Activated CD4-positive, alpha-beta T cell treated with anti-CD3 and anti-CD28 coated beads, Interleukin-2, amount 10 ng/mL, durations not matched to agents 7 days and 5 days (primary cell): ENCODE measurements at regions of chr10 and their contacts with region 1.

Region 1: DNA sequence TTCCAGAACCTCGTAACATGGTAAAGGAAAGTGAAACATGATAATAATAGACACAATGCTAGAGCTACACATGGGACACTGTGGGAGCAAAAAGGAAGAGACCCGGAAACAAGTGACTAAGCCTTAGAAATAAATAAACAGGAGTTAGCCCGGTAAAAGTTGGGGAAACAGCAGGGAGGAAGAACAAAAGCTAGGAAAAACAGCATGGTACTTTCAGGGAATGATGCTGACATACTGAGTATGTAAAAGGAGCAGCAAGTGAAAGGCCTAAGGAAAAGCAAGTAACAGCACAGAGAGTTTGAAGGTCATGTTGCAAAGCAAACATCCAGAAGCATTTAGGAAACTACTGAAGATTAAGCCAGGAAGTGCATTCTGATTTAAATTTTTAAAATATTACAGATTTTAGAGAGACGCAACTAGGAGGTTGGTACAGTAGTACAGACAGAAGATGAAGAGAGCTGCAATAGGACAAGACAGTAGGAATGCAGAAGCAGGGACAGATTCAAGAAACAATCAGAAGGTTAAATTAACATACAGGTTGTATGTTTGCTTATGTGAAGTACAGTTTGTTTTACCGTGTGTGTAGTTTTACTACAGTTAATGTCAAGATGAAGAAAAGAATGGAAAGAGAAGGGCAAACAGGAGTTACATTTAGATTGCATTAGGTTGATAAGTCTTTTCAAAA is 63.7 kb downstream of the ARHGAP12 start:
- DNase-seq: no peak
- H3K4me3 Mint-ChIP-seq: no peak overlapping the region
- H3K27ac Mint-ChIP-seq: no peak overlapping the region
- H3K4me1 Mint-ChIP-seq: peaks cover 14% of the 10 kb centered on the region
- H3K27me3 Mint-ChIP-seq: no peaks in the 10 kb centered on the region

Region 2: GRCh38 chr10:31830887-31831286 is 34.1 kb before region 1 on chr10:
- CTCF ChIA-PET with region 1: no interaction called
- POLR2A ChIA-PET with region 1: no interaction called
- DNase-seq: no peak
- H3K4me3 Mint-ChIP-seq: no peak overlapping the region
- H3K27ac Mint-ChIP-seq: no peak overlapping the region
- H3K4me1 Mint-ChIP-seq: peaks cover 5% of the 10 kb centered on the region
- H3K27me3 Mint-ChIP-seq: no peaks in the 10 kb centered on the region

Region 3: GRCh38 chr10:31883397-31883796 is 18.4 kb after region 1 on chr10:
- CTCF ChIA-PET with region 1: no interaction called
- POLR2A ChIA-PET with region 1: no interaction called
- DNase-seq: no peak
- H3K4me3 Mint-ChIP-seq: no peak overlapping the region
- H3K27ac Mint-ChIP-seq: peak overlapping the region; percentile 1
- H3K4me1 Mint-ChIP-seq: no peaks in the 10 kb centered on the region
- H3K27me3 Mint-ChIP-seq: no peaks in the 10 kb centered on the region

Region 4: DNA sequence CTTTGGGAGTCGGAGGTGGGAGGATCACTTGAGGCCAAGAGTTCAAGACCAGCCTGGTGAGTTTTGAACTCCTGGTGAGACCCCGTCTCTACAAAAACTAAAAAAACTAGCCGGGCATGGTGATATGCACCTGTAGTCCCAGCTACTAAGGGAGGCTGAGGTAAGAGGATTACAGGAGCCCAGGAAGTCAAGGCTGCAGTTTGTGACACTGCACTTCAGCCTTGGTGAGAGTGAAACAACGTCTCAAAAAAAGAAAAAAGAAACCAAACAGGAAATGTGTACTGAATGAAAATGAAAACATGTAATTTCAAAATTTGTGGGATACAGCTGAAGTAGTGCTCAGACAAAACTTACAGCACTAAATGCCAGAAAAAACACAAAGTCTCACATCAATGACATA is 56.1 kb after region 1 on chr10:
- CTCF ChIA-PET with region 1: no interaction called
- POLR2A ChIA-PET with region 1: no interaction called
- DNase-seq: peak; percentile 30
- H3K4me3 Mint-ChIP-seq: peak overlapping the region; percentile 58
- H3K27ac Mint-ChIP-seq: peak overlapping the region; percentile 78
- H3K4me1 Mint-ChIP-seq: peaks cover 76% of the 10 kb centered on the region
- H3K27me3 Mint-ChIP-seq: no peaks in the 10 kb centered on the region

Region 5: GRCh38 chr10:31936933-31937332 is 72.0 kb after region 1 on chr10:
- CTCF ChIA-PET with region 1: interaction called, 4 read pairs
- POLR2A ChIA-PET with region 1: interaction called, 17 read pairs
- DNase-seq: no peak
- H3K4me3 Mint-ChIP-seq: no peak overlapping the region
- H3K27ac Mint-ChIP-seq: no peak overlapping the region
- H3K4me1 Mint-ChIP-seq: peaks cover 14% of the 10 kb centered on the region
- H3K27me3 Mint-ChIP-seq: peaks cover 3% of the 10 kb centered on the region